HEK293 (cell line): ENCODE measurements at regions of chr7 and their contacts with region 1.

Region 1: GRCh38 chr7:50467817-50468610 is 17.9 kb upstream of the FIGNL1 start:
- H3K4me3 ChIP-seq: no peak overlapping the region
- H3K27ac ChIP-seq: no peak overlapping the region
- H3K4me1 ChIP-seq: peaks cover 2% of the 10 kb centered on the region; the same call in 1 of the 2 replicates
- CTCF ChIP-seq: peak; percentile 77

Region 2: DNA sequence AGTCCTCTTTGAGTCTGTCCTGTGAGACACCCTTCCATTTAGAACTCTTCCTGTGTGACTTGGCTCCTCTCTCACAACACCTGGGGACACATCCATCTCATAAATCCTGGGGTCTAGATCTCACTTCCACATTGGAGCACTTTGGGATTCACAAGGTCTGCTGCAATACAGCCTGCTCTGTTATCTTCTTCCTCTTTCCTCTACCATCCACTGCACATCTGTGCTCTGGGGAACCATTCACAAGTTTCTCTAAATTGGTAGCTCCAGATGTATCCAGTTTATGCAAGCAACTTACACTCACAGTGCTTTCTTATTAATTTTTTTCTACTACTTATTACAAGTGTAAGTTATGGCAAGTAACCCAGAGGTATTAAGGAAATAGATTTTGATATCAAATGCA is 12.4 kb before region 1 on chr7:
- CTCF ChIA-PET with region 1: interaction called, 18 read pairs
- POLR2A ChIA-PET with region 1: no interaction called
- H3K4me3 ChIP-seq: no peak overlapping the region
- H3K27ac ChIP-seq: no peak overlapping the region
- H3K4me1 ChIP-seq: no peaks in the 10 kb centered on the region
- CTCF ChIP-seq: no peak

Region 3: GRCh38 chr7:50481867-50482266 is 13.9 kb after region 1 on chr7:
- CTCF ChIA-PET with region 1: interaction called, 10 read pairs
- POLR2A ChIA-PET with region 1: no interaction called
- H3K4me3 ChIP-seq: no peak overlapping the region
- H3K27ac ChIP-seq: no peak overlapping the region
- H3K4me1 ChIP-seq: no peaks in the 10 kb centered on the region
- CTCF ChIP-seq: no peak

Region 4: GRCh38 chr7:50534690-50535290 is 66.8 kb after region 1 on chr7:
- CTCF ChIA-PET with region 1: interaction called, 16 read pairs
- POLR2A ChIA-PET with region 1: no interaction called
- H3K4me3 ChIP-seq: no peak overlapping the region
- H3K27ac ChIP-seq: no peak overlapping the region
- H3K4me1 ChIP-seq: no peaks in the 10 kb centered on the region
- CTCF ChIP-seq: no peak

Region 5: GRCh38 chr7:51067757-51068156 is 599.7 kb after region 1 on chr7:
- CTCF ChIA-PET with region 1: interaction called, 16 read pairs
- POLR2A ChIA-PET with region 1: no interaction called
- H3K4me3 ChIP-seq: no peak overlapping the region
- H3K27ac ChIP-seq: no peak overlapping the region
- H3K4me1 ChIP-seq: no peaks in the 10 kb centered on the region
- CTCF ChIP-seq: no peak

Region 6: DNA sequence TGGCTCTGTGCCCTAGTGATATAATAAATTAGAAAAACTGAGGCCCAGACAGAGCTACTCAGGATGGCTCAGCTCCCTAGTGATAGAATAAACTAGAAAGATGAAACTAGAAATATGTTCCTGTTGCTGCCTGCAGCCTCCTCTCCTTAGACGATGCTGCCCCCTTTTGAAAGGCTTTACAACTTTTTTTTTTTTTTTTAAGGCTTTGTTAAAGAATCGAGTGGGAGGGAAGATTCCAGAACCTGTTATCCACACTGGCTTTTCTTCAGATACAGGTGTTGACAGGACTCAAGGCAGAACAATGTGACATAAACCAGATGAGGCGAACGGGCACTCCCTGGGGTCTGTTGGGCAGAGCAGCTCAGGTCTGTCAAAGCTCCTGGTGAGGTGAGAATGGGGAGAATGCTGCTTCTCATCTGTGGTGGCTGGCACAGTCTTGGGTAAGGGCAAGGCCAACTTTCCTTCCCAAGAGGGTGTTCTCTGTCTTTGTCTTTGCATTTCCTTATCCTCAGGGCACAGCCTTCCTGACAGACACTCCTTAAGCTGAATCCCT is 673.5 kb after region 1 on chr7:
- CTCF ChIA-PET with region 1: interaction called, 30 read pairs
- POLR2A ChIA-PET with region 1: no interaction called
- H3K4me3 ChIP-seq: no peak overlapping the region
- H3K27ac ChIP-seq: no peak overlapping the region
- H3K4me1 ChIP-seq: no peaks in the 10 kb centered on the region
- CTCF ChIP-seq: peak; percentile 39; the same call in 1 of the 2 replicates